Activated CD4-positive, alpha-beta memory T cell treated with anti-CD3 and anti-CD28 coated beads for 36 hours (primary cell): ENCODE measurements at regions of chr7 and their contacts with region 1.

Region 1: GRCh38 chr7:154503962-154504550 is 451.9 kb downstream of the DPP6 start:
- DNase-seq: no peak
- H3K4me3 Mint-ChIP-seq: no peak overlapping the region
- H3K27ac Mint-ChIP-seq: no peak overlapping the region
- H3K4me1 Mint-ChIP-seq: no peaks in the 10 kb centered on the region
- H3K27me3 Mint-ChIP-seq: no peaks in the 10 kb centered on the region

Region 2: GRCh38 chr7:152894273-152895170 is 1609.5 kb before region 1 on chr7:
- CTCF ChIA-PET with region 1: interaction called, 3 read pairs
- POLR2A ChIA-PET with region 1: no interaction called
- intact Hi-C with region 1: loop called (anchors 10 kb)
- DNase-seq: peak; percentile 24
- H3K4me3 Mint-ChIP-seq: no peak overlapping the region
- H3K27ac Mint-ChIP-seq: no peak overlapping the region
- H3K4me1 Mint-ChIP-seq: no peaks in the 10 kb centered on the region
- H3K27me3 Mint-ChIP-seq: peaks cover 6% of the 10 kb centered on the region

Region 3: DNA sequence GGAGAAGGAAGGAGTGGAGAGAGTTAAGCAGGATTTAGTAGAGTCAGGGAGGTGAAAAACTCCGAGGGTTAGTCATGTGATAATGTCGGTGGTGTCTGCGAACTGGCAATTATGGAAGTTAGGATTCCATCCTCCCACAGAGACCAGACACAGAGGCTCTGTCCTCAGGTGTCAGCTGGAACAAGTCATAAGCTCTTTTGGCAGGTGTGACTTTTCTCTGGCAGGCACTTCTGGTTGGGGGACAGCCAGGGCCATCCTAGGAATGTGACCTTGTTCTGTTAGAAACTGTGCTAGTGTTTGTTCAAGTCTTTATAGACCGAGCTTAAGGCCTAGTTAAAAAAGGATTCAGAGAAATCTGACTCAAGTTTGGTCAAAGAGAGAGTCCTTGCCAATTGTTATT is 80.8 kb before region 1 on chr7:
- CTCF ChIA-PET with region 1: no interaction called
- POLR2A ChIA-PET with region 1: no interaction called
- intact Hi-C with region 1: no loop called
- DNase-seq: no peak
- H3K4me3 Mint-ChIP-seq: no peak overlapping the region
- H3K27ac Mint-ChIP-seq: no peak overlapping the region
- H3K4me1 Mint-ChIP-seq: no peaks in the 10 kb centered on the region
- H3K27me3 Mint-ChIP-seq: no peaks in the 10 kb centered on the region

Region 4: GRCh38 chr7:154666768-154667167 is 162.7 kb after region 1 on chr7:
- CTCF ChIA-PET with region 1: no interaction called
- POLR2A ChIA-PET with region 1: no interaction called
- intact Hi-C with region 1: no loop called
- DNase-seq: no peak
- H3K4me3 Mint-ChIP-seq: no peak overlapping the region
- H3K27ac Mint-ChIP-seq: no peak overlapping the region
- H3K4me1 Mint-ChIP-seq: no peaks in the 10 kb centered on the region
- H3K27me3 Mint-ChIP-seq: no peaks in the 10 kb centered on the region